ENCODE measurements at regions of chr14 and their contacts with region 1.

Region 1: GRCh38 chr14:91286530-91286937 is 42.0 kb upstream of the GPR68 start:
- DNase-seq: peak; percentile 83
- H3K4me3 Mint-ChIP-seq: no peak overlapping the region
- H3K27ac Mint-ChIP-seq: no peak overlapping the region
- H3K4me1 Mint-ChIP-seq: peaks cover 23% of the 10 kb centered on the region
- H3K27me3 Mint-ChIP-seq: no peaks in the 10 kb centered on the region
- CTCF ChIP-seq: peak; percentile 76

Region 2: DNA sequence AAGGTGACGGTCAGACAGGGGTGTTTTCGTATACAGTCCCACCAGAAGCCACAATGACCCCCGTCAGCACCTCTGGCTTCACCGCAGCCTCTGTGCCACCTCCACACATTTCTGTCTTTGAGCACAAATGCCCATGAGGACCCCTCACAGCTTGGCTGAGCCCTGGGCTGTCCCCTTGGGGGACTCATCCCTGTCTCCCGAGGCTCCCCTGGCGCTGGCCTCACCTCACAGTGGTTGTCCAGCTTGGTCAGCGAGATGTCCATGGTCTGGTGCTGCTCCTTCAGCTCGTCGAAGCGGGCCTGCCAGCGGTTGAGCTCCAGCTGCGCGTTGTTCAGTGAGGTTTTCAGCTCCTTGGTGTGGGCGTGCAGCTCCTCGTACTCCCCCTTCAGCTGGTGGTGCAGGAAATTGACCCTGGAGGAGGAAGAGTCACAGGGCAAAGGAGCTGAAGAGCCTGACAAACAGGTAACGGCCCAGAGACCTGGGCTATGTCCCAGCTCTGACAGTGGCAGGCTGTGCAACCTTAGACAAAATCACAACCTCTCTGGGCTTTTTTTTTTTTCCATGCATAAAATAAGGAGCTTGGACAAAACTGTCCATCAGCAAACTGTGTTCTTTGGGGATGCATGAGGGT is 10.7 kb after region 1 on chr14:
- CTCF ChIA-PET with region 1: interaction called, 11 read pairs
- POLR2A ChIA-PET with region 1: no interaction called
- intact Hi-C with region 1: no loop called
- DNase-seq: no peak
- H3K4me3 Mint-ChIP-seq: no peak overlapping the region
- H3K27ac Mint-ChIP-seq: no peak overlapping the region
- H3K4me1 Mint-ChIP-seq: no peaks in the 10 kb centered on the region
- H3K27me3 Mint-ChIP-seq: no peaks in the 10 kb centered on the region
- CTCF ChIP-seq: no peak

Region 3: DNA sequence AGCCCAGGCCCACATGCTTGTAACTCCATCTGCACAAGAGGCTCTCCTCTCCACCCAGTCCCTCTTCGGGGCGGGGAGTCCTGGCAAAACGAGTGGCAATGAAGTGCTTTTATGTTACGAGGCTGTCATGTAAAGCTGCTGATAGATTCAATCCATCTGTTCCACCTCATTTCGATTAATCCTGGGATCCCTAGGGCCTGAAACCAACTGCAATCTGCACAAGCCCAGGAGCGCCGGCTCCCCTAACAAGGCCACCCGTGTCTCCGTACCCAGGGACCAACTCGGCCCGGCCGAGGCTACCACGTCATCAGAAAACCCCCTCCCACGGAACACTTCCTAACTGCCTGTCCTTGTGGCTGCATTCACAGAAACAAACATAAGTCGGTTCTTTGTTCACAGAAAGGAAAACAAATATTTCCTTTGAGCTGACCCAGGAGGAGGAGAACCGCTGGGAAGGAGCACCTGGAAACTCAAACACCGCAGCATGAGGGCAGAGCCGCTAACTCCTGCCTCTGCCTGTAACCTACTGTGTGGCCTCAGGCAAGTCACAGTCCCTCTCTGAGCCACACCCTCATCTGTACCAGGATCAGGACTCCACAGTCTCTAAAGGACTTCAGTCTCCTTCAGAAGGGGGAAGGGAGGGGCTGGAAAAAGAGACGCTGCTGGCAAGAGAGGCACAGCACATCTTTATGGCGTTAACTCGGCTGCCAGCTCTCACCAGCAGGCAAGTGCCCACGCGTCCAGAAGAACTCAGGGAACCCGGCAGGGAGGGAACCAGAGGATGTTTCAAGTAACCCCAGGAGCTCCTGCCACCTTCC is 83.3 kb after region 1 on chr14:
- CTCF ChIA-PET with region 1: no interaction called
- POLR2A ChIA-PET with region 1: no interaction called
- intact Hi-C with region 1: no loop called
- DNase-seq: peak; percentile 74
- H3K4me3 Mint-ChIP-seq: peak overlapping the region; percentile 35
- H3K27ac Mint-ChIP-seq: peak overlapping the region; percentile 81
- H3K4me1 Mint-ChIP-seq: peaks cover 41% of the 10 kb centered on the region
- H3K27me3 Mint-ChIP-seq: no peaks in the 10 kb centered on the region
- CTCF ChIP-seq: no peak